ENCODE measurements at regions of chrX and their contacts with region 1.

Region 1: DNA sequence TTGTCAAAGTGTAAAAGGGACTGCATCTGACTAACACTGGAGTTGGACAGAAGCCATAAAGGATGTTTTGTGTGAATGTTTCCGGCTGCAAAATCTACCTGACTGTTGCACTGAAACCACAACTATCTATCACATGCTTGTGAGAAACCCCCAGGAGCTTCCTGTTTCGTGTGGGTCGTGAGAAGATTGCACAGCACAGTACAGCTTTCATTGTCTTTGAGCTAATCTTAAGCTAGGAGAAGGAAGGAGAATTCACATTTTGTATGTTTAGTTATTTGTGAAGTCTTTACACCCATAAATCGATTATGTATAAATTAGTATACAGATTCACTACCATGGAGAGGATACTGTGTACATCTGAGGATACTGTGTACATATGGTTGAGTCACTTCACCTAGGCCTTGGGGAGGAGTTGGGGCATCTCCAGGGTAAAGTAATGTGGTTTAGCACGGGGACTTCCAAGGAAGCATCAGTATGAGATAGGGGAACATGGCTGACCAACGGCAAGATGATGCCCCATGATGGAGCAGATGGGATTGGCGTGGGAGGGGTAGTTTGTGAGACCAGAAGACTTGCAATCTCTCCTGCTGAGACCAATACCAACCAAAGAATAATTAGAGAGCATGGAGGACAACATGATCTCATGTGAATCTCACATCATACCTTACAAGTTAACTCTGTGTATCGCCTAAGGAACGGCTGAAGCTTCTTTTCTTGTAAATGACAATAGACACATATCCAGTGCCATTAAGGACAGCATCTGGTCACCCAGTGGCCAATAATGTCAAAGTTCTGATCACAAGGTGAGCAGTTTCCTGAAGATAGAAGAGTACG is 43.1 kb upstream of the FAM9C start:
- DNase-seq: peak; percentile 76
- H3K4me3 Mint-ChIP-seq: peak overlapping the region; percentile 77
- H3K27ac Mint-ChIP-seq: peak overlapping the region; percentile 99
- H3K4me1 Mint-ChIP-seq: peaks cover 67% of the 10 kb centered on the region
- H3K27me3 Mint-ChIP-seq: no peaks in the 10 kb centered on the region

Region 2: GRCh38 chrX:12974796-12975669 is 112.5 kb before region 1 on chrX and contains the start of gene TMSB4X:
- CTCF ChIA-PET with region 1: interaction called, 11 read pairs
- POLR2A ChIA-PET with region 1: interaction called, 192 read pairs
- intact Hi-C with region 1: loop called (anchors 1 kb)
- DNase-seq: peak; percentile 89
- H3K4me3 Mint-ChIP-seq: peak within 1 kb of the TSS; percentile 94
- H3K27ac Mint-ChIP-seq: peak within 1 kb of the TSS; percentile 99
- H3K4me1 Mint-ChIP-seq: peaks cover 22% of the 10 kb centered on the region
- H3K27me3 Mint-ChIP-seq: peaks cover 3% of the 10 kb centered on the region
- total RNA-seq, gene TMSB4X: 6,087 to 6,256 TPM

Region 3: DNA sequence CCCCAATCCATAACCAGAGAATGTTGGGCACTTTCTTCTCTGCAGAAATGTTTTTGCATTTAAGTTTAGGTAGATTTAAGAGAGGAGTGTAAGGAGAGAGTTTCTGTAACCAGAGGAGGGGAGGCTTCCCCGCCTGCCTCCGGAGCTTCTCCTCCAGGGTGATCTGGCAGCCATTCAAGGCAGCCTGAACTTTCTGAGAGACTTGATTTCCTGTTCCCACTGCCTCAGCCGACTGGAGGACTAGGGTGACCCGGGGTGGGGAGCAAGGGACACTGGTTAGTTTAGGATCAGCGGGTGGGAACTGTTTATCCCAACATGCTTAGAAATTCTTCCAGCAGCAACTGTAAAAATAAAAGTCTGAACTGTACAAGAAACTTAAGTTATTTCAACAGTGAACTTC is 58.2 kb before region 1 on chrX:
- CTCF ChIA-PET with region 1: no interaction called
- POLR2A ChIA-PET with region 1: no interaction called
- intact Hi-C with region 1: loop called (anchors 1 kb)
- DNase-seq: peak; percentile 22
- H3K4me3 Mint-ChIP-seq: no peak overlapping the region
- H3K27ac Mint-ChIP-seq: peak overlapping the region; percentile 81
- H3K4me1 Mint-ChIP-seq: peaks cover 77% of the 10 kb centered on the region
- H3K27me3 Mint-ChIP-seq: no peaks in the 10 kb centered on the region

Region 4: DNA sequence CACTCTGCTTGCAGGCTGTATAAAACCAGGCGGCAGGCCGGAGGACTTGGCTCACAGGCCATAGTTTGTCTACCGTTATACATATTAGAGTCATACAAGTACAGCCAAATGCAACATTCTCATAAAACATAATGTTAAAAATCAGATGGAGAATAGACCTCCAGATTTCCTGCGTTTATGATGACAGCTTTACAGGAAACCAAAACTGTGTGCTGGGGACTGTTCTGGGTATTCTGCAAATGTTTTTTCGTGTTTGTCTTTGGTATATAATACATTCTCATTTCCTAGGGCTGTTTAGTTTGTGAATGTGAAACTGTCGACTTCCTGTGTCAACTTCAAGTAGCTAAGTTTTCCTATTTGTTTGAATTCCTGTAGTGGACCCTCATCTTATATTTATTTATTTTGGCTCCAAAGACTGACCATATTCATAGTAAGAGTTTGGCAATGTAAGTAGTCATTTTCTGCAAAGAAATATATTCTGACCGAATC is 36.4 kb after region 1 on chrX:
- CTCF ChIA-PET with region 1: no interaction called
- POLR2A ChIA-PET with region 1: no interaction called
- intact Hi-C with region 1: no loop called
- DNase-seq: no peak
- H3K4me3 Mint-ChIP-seq: peak overlapping the region; percentile 26
- H3K27ac Mint-ChIP-seq: peak overlapping the region; percentile 61
- H3K4me1 Mint-ChIP-seq: peaks cover 38% of the 10 kb centered on the region
- H3K27me3 Mint-ChIP-seq: no peaks in the 10 kb centered on the region

Region 5: GRCh38 chrX:13254076-13254785 is 166.7 kb after region 1 on chrX:
- CTCF ChIA-PET with region 1: no interaction called
- POLR2A ChIA-PET with region 1: no interaction called
- intact Hi-C with region 1: loop called (anchors 2 kb)
- DNase-seq: peak; percentile 28
- H3K4me3 Mint-ChIP-seq: no peak overlapping the region
- H3K27ac Mint-ChIP-seq: no peak overlapping the region
- H3K4me1 Mint-ChIP-seq: peaks cover 54% of the 10 kb centered on the region
- H3K27me3 Mint-ChIP-seq: no peaks in the 10 kb centered on the region

Region 6: DNA sequence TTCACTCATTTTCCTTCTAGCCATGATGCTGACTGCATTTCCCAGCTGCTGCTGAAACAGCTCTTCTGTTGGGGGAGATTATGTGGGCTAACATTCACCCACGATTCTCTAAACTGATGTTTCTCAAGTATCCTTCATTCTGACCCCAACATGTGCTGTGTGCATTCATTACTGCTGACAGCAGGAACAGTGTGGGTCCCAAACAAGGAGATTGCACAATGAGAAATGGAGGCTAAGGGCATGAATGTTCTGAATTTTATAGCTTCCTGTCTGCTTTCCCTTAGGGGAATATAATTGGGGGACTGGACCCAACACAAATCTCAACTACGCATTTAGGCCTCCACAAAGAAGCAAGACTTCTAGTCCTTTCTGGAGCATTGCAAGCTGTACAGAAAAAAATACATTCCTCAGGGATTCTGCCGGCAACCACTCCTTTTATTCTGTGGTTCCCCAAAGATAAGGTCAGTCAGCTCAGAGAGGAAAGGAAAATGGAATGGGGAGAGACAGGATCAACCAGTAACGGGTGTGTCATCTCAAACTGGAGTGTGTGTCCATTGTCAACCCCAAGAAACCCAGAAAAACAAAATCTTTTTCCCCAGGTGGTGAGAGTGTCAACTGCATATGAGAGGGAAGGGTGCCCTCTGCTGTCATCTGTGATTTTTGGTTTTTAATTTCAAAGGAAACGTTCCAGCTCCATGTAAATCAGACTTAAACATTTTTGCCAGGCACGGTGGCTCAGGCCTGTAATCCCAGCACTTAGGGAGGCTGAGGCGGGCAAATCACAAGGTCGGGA is 400.4 kb after region 1 on chrX:
- CTCF ChIA-PET with region 1: interaction called, 15 read pairs
- POLR2A ChIA-PET with region 1: no interaction called
- intact Hi-C with region 1: loop called (anchors 1 kb)
- DNase-seq: peak; percentile 39
- H3K4me3 Mint-ChIP-seq: no peak overlapping the region
- H3K27ac Mint-ChIP-seq: peak overlapping the region; percentile 56
- H3K4me1 Mint-ChIP-seq: peaks cover 11% of the 10 kb centered on the region
- H3K27me3 Mint-ChIP-seq: no peaks in the 10 kb centered on the region

Region 7: GRCh38 chrX:14029425-14030173 is 942.1 kb after region 1 on chrX and contains the start of gene GEMIN8:
- CTCF ChIA-PET with region 1: no interaction called
- POLR2A ChIA-PET with region 1: no interaction called
- intact Hi-C with region 1: loop called (anchors 2 kb)
- DNase-seq: peak; percentile 90
- H3K4me3 Mint-ChIP-seq: peak within 1 kb of the TSS; percentile 94
- H3K27ac Mint-ChIP-seq: peak within 1 kb of the TSS; percentile 94
- H3K4me1 Mint-ChIP-seq: peaks cover 25% of the 10 kb centered on the region
- H3K27me3 Mint-ChIP-seq: no peaks in the 10 kb centered on the region
- total RNA-seq, gene GEMIN8: 8.5 to 10.6 TPM